ENCODE measurements at regions of chr10 and their contacts with region 1.

Region 1: GRCh38 chr10:21495752-21496342 is 29.6 kb downstream of the SKIDA1 start:
- DNase-seq: peak; percentile 82
- H3K4me3 Mint-ChIP-seq: peak overlapping the region; percentile 90
- H3K27ac Mint-ChIP-seq: no peak overlapping the region
- H3K4me1 Mint-ChIP-seq: peaks cover 20% of the 10 kb centered on the region
- H3K27me3 Mint-ChIP-seq: peaks cover 71% of the 10 kb centered on the region

Region 2: GRCh38 chr10:19819419-19820033 is 1676.3 kb before region 1 on chr10:
- intact Hi-C with region 1: loop called (anchors 10 kb)
- DNase-seq: no peak
- H3K4me3 Mint-ChIP-seq: no peak overlapping the region
- H3K27ac Mint-ChIP-seq: no peak overlapping the region
- H3K4me1 Mint-ChIP-seq: no peaks in the 10 kb centered on the region
- H3K27me3 Mint-ChIP-seq: peaks cover 31% of the 10 kb centered on the region

Region 3: DNA sequence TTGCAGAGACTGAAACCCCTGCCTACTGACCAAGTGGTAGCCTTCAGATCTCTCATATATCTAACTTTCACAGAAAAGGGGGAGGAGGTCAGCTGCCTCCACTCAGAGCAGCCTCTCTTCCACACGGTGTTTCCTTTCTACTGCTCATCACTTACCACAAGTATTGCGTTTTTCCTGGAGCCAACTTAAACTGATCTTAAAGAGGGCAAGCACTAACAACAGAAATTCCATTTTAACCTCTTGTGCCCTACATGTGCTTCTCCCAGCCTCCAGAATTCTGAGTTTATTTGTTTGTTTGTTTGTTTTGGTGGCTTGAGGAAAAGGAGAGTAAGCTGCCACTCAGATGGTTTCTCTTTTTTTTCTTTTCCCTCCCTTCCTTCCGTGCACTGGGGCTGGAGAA is 10.5 kb after region 1 on chr10:
- intact Hi-C with region 1: no loop called
- DNase-seq: no peak
- H3K4me3 Mint-ChIP-seq: no peak overlapping the region
- H3K27ac Mint-ChIP-seq: no peak overlapping the region
- H3K4me1 Mint-ChIP-seq: no peaks in the 10 kb centered on the region
- H3K27me3 Mint-ChIP-seq: peaks cover 59% of the 10 kb centered on the region

Region 4: GRCh38 chr10:21516242-21517131 is 20.6 kb after region 1 on chr10:
- intact Hi-C with region 1: loop called (anchors 1 kb)
- DNase-seq: peak; percentile 45
- H3K4me3 Mint-ChIP-seq: peak overlapping the region; percentile 79
- H3K27ac Mint-ChIP-seq: no peak overlapping the region
- H3K4me1 Mint-ChIP-seq: peaks cover 47% of the 10 kb centered on the region
- H3K27me3 Mint-ChIP-seq: peaks cover 79% of the 10 kb centered on the region

Region 5: GRCh38 chr10:21732067-21732772 is 236.4 kb after region 1 on chr10:
- intact Hi-C with region 1: loop called (anchors 1 kb)
- DNase-seq: peak; percentile 19
- H3K4me3 Mint-ChIP-seq: no peak overlapping the region
- H3K27ac Mint-ChIP-seq: no peak overlapping the region
- H3K4me1 Mint-ChIP-seq: peaks cover 29% of the 10 kb centered on the region
- H3K27me3 Mint-ChIP-seq: no peaks in the 10 kb centered on the region

Region 6: DNA sequence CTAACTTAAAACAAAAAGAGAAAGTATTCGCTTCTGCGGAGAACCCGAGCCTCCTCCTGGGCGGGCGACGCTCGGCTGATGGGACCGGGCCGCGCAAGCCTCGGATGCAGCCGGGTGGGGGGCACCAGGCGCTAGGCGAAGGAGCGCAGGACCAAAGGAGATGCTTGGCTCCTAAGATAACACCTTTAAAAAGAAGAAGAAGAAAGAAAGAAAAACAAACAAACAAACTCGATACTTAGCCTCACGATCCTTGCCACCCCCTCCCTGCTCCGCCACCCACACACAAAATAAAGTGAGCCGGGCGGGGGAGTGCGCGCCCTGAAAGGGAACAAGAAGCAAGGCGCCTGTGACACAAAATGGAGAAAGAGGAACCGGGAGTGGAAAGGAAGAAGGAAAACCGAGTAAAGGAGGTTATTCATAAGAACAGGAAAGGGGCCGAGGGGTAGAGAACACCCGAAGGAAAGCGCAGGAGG is 755.9 kb after region 1 on chr10:
- intact Hi-C with region 1: loop called (anchors 5 kb)
- DNase-seq: peak; percentile 58
- H3K4me3 Mint-ChIP-seq: peak overlapping the region; percentile 88
- H3K27ac Mint-ChIP-seq: peak overlapping the region; percentile 98
- H3K4me1 Mint-ChIP-seq: peaks cover 44% of the 10 kb centered on the region
- H3K27me3 Mint-ChIP-seq: peaks cover 18% of the 10 kb centered on the region

Region 7: GRCh38 chr10:22475651-22476600 is 980.1 kb after region 1 on chr10:
- intact Hi-C with region 1: loop called (anchors 10 kb)
- DNase-seq: peak; percentile 3
- H3K4me3 Mint-ChIP-seq: peak overlapping the region; percentile 86
- H3K27ac Mint-ChIP-seq: peak overlapping the region; percentile 86
- H3K4me1 Mint-ChIP-seq: peaks cover 20% of the 10 kb centered on the region
- H3K27me3 Mint-ChIP-seq: peaks cover 61% of the 10 kb centered on the region

Measured in activated T-helper 1 cell treated with anti-CD3 and anti-CD28 coated beads, Interleukin-12 subunit alpha, Interleukin-12 subunit beta, Interleukin-2, Interleukin-4 antibody, amounts not matched to agents 30 ng/mL and 10 ng/mL and 1 ng/mL, durations not matched to agents 14 hours and 24 hours and 36 hours (primary cell).